CD4-positive, alpha-beta memory T cell (primary cell): ENCODE measurements at regions of chr1 and their contacts with region 1.

Region 1: GRCh38 chr1:234309598-234310459 is 63.4 kb upstream of the COA6 start:
- DNase-seq: peak; percentile 60 to 71 (median 65)
- H3K4me3 ChIP-seq: no peak overlapping the region
- H3K4me3 Mint-ChIP-seq: peak overlapping the region in 3 of 8 donors; percentile 10 to 59 (median 49)
- H3K27ac ChIP-seq: no peak overlapping the region
- H3K27ac Mint-ChIP-seq: peak overlapping the region in 2 of 7 donors; percentile 1 to 85
- H3K4me1 ChIP-seq: peaks cover 37% of the 10 kb centered on the region
- H3K4me1 Mint-ChIP-seq: peaks cover 0 to 42% (median 15%) of the 10 kb centered on the region in 4 donors
- H3K27me3 ChIP-seq: no peaks in the 10 kb centered on the region
- H3K27me3 Mint-ChIP-seq: peaks cover 0 to 13% of the 10 kb centered on the region in 2 donors

Region 2: DNA sequence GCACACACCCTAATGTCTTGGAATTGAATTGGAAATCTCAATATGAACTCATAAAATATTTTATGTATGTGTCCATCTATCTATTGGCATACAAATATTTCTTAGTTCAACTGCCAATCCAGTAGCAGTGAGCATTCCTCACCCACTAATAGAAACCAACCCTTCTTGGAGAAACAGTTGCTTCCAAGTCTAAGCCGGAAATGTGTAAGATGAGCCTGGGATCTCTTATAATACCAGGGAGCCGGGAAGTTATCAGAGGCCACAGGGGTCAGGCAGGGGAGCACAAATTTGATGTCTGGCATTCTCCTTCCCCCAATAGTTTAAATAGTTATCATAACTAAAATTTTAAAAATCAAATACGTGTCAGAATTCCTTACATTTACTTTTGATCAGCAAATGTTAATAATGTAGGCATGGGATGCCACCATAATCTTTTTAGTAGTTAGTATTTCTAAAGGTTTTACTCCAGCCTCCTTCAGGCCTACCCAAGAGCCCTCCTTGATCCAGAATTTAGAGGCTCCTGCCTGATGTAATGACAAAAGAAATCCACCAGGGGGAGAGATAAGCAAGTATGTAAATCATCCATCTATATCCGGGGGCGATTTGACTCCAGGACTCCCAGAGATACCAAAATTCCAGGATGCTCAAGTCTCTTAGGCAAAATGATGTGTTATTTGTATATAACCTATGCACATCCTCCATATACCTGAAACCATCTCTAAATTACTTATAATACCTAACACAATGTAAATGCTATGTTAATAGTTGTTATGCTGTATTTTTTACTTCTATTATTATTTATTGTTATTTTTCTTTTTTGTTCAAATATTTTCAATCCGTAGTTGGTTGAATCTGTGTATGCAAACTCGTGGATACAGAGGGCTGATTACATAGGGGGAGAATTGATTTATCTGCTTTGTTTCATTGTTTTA is 155.2 kb before region 1 on chr1:
- CTCF ChIA-PET with region 1: interaction called, 3 read pairs
- POLR2A ChIA-PET with region 1: no interaction called
- intact Hi-C with region 1: loop called (anchors 1 kb)
- DNase-seq: peak in 4 of 5 donors; percentile 9 to 54 (median 42)
- H3K4me3 ChIP-seq: no peak overlapping the region
- H3K4me3 Mint-ChIP-seq: no peak overlapping the region
- H3K27ac ChIP-seq: no peak overlapping the region
- H3K27ac Mint-ChIP-seq: no peak overlapping the region
- H3K4me1 ChIP-seq: no peaks in the 10 kb centered on the region
- H3K4me1 Mint-ChIP-seq: no peaks in the 10 kb centered on the region
- H3K27me3 ChIP-seq: no peaks in the 10 kb centered on the region
- H3K27me3 Mint-ChIP-seq: peaks cover 3 to 4% of the 10 kb centered on the region in 2 donors

Region 3: GRCh38 chr1:234295068-234295467 is 14.8 kb before region 1 on chr1:
- CTCF ChIA-PET with region 1: interaction called, 24 read pairs
- POLR2A ChIA-PET with region 1: no interaction called
- intact Hi-C with region 1: no loop called
- DNase-seq: no peak
- H3K4me3 ChIP-seq: no peak overlapping the region
- H3K4me3 Mint-ChIP-seq: no peak overlapping the region
- H3K27ac ChIP-seq: no peak overlapping the region
- H3K27ac Mint-ChIP-seq: no peak overlapping the region
- H3K4me1 ChIP-seq: no peaks in the 10 kb centered on the region
- H3K4me1 Mint-ChIP-seq: no peaks in the 10 kb centered on the region
- H3K27me3 ChIP-seq: no peaks in the 10 kb centered on the region
- H3K27me3 Mint-ChIP-seq: peaks cover 2 to 14% of the 10 kb centered on the region in 2 donors

Region 4: DNA sequence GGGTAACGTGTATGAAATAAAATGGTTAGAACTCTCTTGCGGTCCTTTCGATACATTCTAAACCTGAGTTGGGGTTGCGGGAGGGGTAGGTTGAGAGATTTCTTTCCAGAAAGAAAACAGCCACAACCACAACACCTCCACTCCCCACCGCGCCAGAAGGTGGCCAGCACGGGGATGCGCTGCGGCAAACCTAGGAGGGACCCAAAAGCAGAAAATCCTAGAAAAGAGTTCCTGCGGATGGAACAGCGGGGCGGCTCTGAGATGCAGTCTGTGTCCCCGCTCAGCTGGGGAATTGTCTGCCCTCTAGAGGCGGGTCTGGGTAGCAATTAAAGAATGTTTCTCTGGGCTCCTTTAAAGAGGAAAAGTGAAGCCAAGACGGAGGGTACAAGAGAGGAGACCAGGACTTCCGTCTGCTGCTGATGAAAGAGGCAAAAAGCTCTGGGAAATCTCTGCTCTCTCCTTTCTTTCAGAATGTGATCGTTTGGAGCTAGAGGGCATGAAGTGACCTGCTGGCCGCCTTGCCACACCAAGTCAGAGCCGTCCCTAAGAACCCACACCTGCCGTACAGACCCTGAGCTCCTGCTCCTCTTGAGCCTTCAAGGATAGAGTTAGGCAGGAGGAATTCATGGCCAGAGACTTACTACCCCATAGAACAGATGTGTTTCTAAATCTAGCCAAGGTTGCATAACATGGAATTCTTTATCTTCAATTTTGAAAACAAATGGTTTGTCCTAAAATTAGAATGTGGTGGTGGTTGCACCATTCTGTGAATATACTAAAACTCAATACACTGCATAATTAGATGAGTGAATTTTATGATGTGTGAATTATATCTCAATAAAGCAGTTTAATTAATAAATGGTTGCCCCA is 16.9 kb after region 1 on chr1:
- CTCF ChIA-PET with region 1: interaction called, 32 read pairs
- POLR2A ChIA-PET with region 1: no interaction called
- intact Hi-C with region 1: loop called (anchors 1 kb)
- DNase-seq: peak; percentile 69 to 76 (median 70)
- H3K4me3 ChIP-seq: peak overlapping the region; percentile 20 to 71
- H3K4me3 Mint-ChIP-seq: peak overlapping the region; percentile 89 to 97 (median 92)
- H3K27ac ChIP-seq: peak overlapping the region; percentile 40
- H3K27ac Mint-ChIP-seq: peak overlapping the region; percentile 52 to 98 (median 85)
- H3K4me1 ChIP-seq: peaks cover 8% of the 10 kb centered on the region
- H3K4me1 Mint-ChIP-seq: peaks cover 7 to 33% (median 18%) of the 10 kb centered on the region in 4 donors
- H3K27me3 ChIP-seq: no peaks in the 10 kb centered on the region
- H3K27me3 Mint-ChIP-seq: peaks cover 1 to 26% of the 10 kb centered on the region in 2 donors